ENCODE measurements at regions of chr18 and their contacts with region 1.

Region 1: DNA sequence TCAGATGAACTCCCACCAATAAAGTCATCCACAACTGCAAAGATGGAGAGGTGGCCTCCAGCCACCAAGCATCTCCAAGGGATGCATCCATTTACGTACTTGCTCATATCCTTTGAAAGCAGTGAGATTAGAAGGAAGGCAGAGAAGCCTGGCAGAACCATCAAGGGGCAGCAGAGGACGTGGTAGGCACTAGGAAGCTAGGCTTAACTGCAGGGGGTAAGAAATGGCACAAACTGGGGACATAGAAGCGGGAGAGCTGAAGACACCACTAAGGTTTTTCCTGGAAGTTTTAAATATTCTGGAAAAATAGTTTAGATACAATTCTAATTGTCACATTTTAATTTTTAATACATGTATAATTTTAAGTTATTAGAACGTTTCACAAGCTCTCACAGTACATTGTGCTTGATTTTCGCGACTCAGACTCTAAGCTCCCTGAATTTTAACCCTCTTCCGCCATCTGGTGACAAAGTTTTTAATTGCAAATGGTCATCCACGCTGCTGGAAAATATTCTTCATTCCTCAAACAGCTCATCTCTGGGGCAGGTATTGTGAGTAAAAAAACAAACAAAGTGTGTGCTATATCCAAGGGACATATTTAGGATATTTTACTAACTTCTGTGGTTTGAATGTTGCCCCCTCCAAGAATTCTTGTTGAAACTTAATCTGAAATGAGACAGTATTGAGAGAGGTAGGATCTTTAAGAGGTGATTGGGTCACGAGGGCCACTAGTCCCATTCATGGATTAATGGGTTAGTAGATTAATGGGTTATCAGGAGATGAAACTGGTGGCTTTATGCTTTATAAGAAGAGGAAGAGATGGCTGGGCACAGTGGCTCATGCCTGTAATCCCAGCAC is 1.6 kb upstream of the PSTPIP2 start:
- DNase-seq: peak; percentile 63
- H3K4me3 ChIP-seq: no peak overlapping the region
- H3K27ac ChIP-seq: no peak overlapping the region
- H3K4me1 ChIP-seq: no peaks in the 10 kb centered on the region
- H3K27me3 ChIP-seq: no peaks in the 10 kb centered on the region
- CTCF ChIP-seq: peak in 3 of 4 experiments; percentile 64 to 75 (median 64)
- POLR2A ChIP-seq: no peak

Region 2: DNA sequence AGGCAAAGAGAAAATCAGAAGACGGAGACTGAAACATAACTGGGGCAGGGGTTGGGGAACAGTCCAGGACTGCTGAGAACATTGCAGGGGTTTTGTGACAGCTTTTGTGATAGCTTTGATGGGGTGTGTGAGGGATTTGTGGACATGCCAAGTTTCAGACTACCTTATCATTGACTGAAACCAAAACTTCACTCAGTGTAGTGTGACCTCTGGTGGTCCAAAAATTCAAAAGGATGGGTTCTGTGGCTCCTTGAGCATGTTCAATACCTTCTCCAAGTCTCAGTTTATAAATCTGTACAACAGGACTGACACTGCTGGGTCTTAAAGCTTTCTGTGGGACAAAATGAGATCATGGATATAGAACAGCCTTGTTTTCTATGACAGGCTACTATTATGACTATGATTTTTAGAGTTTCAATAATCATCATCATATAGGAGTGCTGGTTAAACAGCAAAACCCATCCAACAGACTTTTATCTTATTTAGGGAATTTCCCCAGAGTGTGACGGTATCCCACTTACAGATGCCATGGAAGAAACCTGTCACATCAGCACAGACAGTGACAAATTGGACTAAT is 717.7 kb before region 1 on chr18:
- intact Hi-C with region 1: no loop called
- DNase-seq: no peak
- H3K4me3 ChIP-seq: no peak overlapping the region
- H3K27ac ChIP-seq: no peak overlapping the region
- H3K4me1 ChIP-seq: no peaks in the 10 kb centered on the region
- H3K27me3 ChIP-seq: no peaks in the 10 kb centered on the region
- CTCF ChIP-seq: no peak
- POLR2A ChIP-seq: no peak

Region 3: GRCh38 chr18:45690975-45691815 is 382.5 kb before region 1 on chr18:
- intact Hi-C with region 1: loop called (anchors 10 kb)
- DNase-seq: peak; percentile 78
- H3K4me3 ChIP-seq: no peak overlapping the region
- H3K27ac ChIP-seq: no peak overlapping the region
- H3K4me1 ChIP-seq: no peaks in the 10 kb centered on the region
- H3K27me3 ChIP-seq: no peaks in the 10 kb centered on the region
- CTCF ChIP-seq: peak; percentile 45 to 91 (median 84)
- POLR2A ChIP-seq: no peak

Region 4: GRCh38 chr18:45920367-45920766 is 153.3 kb before region 1 on chr18:
- intact Hi-C with region 1: loop called (anchors 10 kb)
- DNase-seq: peak; percentile 81
- H3K4me3 ChIP-seq: no peak overlapping the region
- H3K27ac ChIP-seq: no peak overlapping the region
- H3K4me1 ChIP-seq: no peaks in the 10 kb centered on the region
- H3K27me3 ChIP-seq: no peaks in the 10 kb centered on the region
- CTCF ChIP-seq: no peak
- POLR2A ChIP-seq: no peak

Region 5: DNA sequence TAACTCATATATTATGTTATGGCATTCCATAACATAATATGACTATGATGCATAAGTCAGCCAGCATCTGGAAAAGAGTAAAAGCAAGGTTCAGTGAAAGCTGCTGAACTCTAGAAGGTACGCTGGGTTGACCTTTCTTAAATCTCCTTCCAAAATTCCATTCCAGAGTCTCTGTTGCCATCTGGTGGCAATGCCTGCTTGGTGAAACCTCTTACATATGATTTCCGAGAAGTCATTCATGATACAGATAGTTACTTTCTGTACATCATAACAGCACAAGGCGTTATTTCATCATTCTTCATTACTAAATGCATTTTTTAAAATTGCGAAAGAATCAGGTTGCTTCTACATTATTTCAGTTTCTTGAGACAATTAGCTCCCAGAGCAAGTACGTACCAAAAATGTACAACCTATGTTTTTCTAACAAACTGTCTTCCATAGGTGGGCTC is 99.6 kb before region 1 on chr18:
- intact Hi-C with region 1: loop called (anchors 10 kb)
- DNase-seq: peak; percentile 51
- H3K4me3 ChIP-seq: no peak overlapping the region
- H3K27ac ChIP-seq: no peak overlapping the region
- H3K4me1 ChIP-seq: no peaks in the 10 kb centered on the region
- H3K27me3 ChIP-seq: no peaks in the 10 kb centered on the region
- CTCF ChIP-seq: peak in 3 of 4 experiments; percentile 57 to 82 (median 73)
- POLR2A ChIP-seq: no peak

Region 6: GRCh38 chr18:47274961-47275360 is 1201.3 kb after region 1 on chr18:
- intact Hi-C with region 1: no loop called
- DNase-seq: no peak
- H3K4me3 ChIP-seq: no peak overlapping the region
- H3K27ac ChIP-seq: no peak overlapping the region
- H3K4me1 ChIP-seq: no peaks in the 10 kb centered on the region
- H3K27me3 ChIP-seq: no peaks in the 10 kb centered on the region
- CTCF ChIP-seq: no peak
- POLR2A ChIP-seq: no peak